Activated CD8-positive, alpha-beta T cell treated with anti-CD3 and anti-CD28 coated beads, Interleukin-2, amount 10 ng/mL, durations not matched to agents 7 days and 5 days (primary cell): ENCODE measurements at regions of chr18 and their contacts with region 1.

Region 1: DNA sequence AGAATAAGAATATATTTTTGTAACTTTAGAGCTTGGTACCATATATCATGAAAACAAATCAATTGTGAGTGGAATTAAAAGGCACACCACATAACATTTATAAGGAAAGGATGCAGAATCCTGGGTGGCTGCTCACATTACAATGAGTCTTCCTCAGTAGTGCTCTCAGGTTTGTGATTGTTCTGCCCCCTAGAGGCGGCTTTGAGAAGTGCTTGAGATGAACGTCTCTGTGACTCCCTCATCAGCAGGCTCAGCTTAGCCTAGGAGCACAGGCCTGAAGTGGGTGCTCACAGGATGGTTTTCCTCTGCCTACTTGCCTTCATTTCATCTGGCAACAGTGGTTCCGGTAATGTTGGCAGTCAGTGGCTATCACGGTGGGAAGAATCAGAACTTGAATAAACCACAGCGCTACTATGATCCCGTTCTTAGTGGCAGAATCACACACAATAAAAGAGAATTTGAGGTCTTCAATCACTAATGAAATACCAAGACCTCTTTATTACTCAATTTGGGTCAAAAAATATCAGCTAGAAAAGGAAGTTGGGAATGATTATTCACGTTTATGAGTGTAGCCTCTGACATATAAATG is 38.1 kb upstream of the B4GALT6 start:
- DNase-seq: peak; percentile 82
- ATAC-seq: peak; percentile 91
- H3K4me3 Mint-ChIP-seq: no peak overlapping the region
- H3K27ac Mint-ChIP-seq: no peak overlapping the region
- H3K4me1 Mint-ChIP-seq: peaks cover 7% of the 10 kb centered on the region
- H3K27me3 Mint-ChIP-seq: peaks cover 26% of the 10 kb centered on the region

Region 2: GRCh38 chr18:31555971-31556747 is 166.3 kb before region 1 on chr18:
- CTCF ChIA-PET with region 1: interaction called, 64 read pairs
- POLR2A ChIA-PET with region 1: interaction called, 5 read pairs
- DNase-seq: peak; percentile 58
- ATAC-seq: no peak
- H3K4me3 Mint-ChIP-seq: no peak overlapping the region
- H3K27ac Mint-ChIP-seq: no peak overlapping the region
- H3K4me1 Mint-ChIP-seq: no peaks in the 10 kb centered on the region
- H3K27me3 Mint-ChIP-seq: peaks cover 10% of the 10 kb centered on the region

Region 3: DNA sequence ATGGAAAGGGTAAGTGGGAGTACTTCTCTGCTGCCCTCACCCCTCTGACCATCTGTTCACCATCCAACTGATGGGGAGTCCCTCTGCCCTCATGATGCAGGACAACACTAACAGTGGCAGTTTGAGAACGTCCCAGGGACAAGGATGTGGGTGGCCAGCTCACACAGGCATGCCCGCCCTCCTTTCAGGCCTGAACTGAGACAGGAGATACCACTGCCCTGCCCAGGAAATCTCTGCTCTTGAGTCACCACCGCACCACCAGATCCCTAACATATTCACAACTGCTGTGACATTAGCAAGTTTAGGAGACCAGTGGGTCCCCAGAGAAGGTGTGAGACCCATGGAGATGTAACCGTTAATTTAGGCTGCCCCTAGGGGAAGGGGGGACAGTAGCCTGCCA is 154.2 kb after region 1 on chr18:
- CTCF ChIA-PET with region 1: no interaction called
- POLR2A ChIA-PET with region 1: no interaction called
- DNase-seq: no peak
- ATAC-seq: no peak
- H3K4me3 Mint-ChIP-seq: no peak overlapping the region
- H3K27ac Mint-ChIP-seq: peak overlapping the region; percentile 16
- H3K4me1 Mint-ChIP-seq: peaks cover 7% of the 10 kb centered on the region
- H3K27me3 Mint-ChIP-seq: no peaks in the 10 kb centered on the region